ENCODE measurements at regions of chr12 and their contacts with region 1.

Region 1: DNA sequence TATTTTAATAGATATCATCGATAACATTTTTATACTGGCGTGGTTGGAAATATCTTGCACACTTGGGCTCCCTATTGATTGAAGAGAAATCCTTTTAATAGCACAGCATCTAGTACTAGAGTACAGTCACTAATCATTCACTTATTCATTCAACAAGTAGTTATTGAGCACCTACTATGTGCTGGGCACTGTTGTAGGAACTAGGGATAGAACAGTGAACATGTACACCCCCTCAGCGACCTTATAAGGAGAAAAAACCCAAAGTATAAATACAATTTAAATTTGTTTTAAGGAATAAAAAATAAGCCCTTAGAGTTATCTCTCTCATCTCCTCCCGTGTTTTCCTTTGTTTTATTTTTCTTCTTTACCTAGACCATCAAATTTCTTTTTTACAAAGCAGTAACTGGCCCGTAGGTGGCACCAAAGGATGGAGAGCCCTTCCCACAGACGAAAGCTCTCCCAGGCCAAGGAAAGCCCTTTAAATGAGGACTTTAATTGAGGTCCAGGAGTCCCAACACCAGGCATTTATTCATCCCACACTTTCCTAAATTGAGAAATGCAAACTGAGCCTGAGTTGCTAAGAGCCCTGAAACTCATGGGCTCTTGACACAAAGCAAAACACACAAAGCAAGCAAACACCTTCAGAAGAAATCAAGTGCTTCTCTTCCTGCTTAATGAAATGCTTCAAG is 29.0 kb downstream of the PEBP1 start:
- DNase-seq: no peak
- ATAC-seq: 0 out of 3 replicates have a peak, but pooled peaks have one; percentile 13
- H3K4me3 ChIP-seq: no peak overlapping the region
- H3K27ac ChIP-seq: no peak overlapping the region
- H3K4me1 ChIP-seq: peaks cover 24% of the 10 kb centered on the region
- H3K27me3 ChIP-seq: no peaks in the 10 kb centered on the region
- CTCF ChIP-seq: peak; percentile 45 to 56 (median 45)
- EP300 ChIP-seq: no peak
- POLR2A ChIP-seq: no peak
- RAD21 ChIP-seq: peak; percentile 72

Region 2: DNA sequence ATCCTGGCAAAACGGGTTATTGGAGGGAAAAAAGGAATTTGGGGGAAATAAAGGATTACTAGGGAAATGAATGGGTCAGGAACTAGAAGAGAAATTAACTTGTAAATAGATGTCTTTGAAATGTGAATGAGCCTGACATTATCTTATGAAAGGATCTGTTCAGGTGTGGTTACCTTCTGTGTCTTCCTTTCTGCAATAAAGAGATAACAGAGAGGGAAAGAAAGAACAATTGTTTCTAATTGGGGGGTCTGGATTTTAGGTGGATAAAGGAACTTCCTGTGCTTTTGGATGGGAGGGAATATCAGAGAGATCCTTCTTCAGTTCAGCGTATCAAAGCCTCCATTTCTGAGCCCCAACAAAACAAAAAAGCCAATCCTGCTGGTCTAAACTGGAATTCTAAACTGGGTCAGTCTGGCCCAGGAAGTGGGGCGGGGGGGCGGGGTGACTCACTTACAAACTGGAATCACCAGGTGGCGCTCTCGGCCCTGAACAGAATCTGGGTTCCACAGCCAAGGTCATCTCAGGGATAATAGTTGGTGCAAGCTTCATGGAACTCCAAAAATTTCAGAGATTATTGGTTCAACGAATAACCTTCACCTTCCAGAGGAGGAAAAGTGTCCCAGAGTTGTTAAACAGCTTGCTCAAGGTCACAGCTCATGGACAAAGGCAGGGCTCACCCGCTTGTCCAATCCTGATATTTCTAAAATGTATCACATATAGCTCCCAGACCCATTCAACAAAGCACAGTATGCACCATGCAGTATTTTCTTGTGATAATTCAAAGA is 44.2 kb before region 1 on chr12:
- CTCF ChIA-PET with region 1: interaction called, 14 read pairs
- POLR2A ChIA-PET with region 1: no interaction called
- RAD21 ChIA-PET with region 1: interaction called, 5 read pairs
- SMC1A ChIA-PET with region 1: interaction called, 4 read pairs
- in situ Hi-C with region 1: no loop called
- intact Hi-C with region 1: no loop called
- DNase-seq: no peak
- ATAC-seq: peak; percentile 97
- H3K4me3 ChIP-seq: no peak overlapping the region
- H3K27ac ChIP-seq: peak overlapping the region; percentile 83
- H3K4me1 ChIP-seq: no peaks in the 10 kb centered on the region; the same call in 1 of the 2 replicates
- H3K27me3 ChIP-seq: no peaks in the 10 kb centered on the region
- CTCF ChIP-seq: peak; percentile 50 to 70 (median 64)
- EP300 ChIP-seq: no peak
- POLR2A ChIP-seq: no peak
- RAD21 ChIP-seq: peak; percentile 70

Region 3: DNA sequence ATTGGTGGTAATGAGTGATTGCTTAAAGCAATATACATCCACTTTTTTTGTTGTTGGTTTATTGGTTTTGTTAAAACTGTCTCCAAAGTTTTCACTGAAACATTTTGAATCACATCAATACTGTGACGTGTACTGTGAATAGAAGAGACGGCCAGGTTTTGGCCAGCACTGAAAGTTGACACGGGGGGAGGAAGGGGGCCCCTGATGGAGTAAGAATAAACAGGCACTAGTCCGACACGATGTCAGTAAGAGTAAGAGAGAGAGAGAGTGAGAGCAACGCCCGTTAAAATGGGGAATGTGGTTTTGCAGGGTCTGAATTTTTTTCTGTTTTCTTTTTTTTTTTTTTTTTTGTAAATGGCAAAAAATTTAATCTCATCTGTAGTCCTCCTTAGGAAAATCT is 14.3 kb before region 1 on chr12:
- CTCF ChIA-PET with region 1: interaction called, 7 read pairs
- POLR2A ChIA-PET with region 1: interaction called, 3 read pairs
- RAD21 ChIA-PET with region 1: interaction called, 3 read pairs
- SMC1A ChIA-PET with region 1: interaction called, 21 read pairs
- in situ Hi-C with region 1: no loop called
- intact Hi-C with region 1: no loop called
- DNase-seq: no peak
- ATAC-seq: no peak
- H3K4me3 ChIP-seq: no peak overlapping the region
- H3K27ac ChIP-seq: no peak overlapping the region
- H3K4me1 ChIP-seq: peaks cover 4% of the 10 kb centered on the region
- H3K27me3 ChIP-seq: no peaks in the 10 kb centered on the region
- CTCF ChIP-seq: no peak
- EP300 ChIP-seq: no peak
- POLR2A ChIP-seq: no peak
- RAD21 ChIP-seq: no peak

Region 4: DNA sequence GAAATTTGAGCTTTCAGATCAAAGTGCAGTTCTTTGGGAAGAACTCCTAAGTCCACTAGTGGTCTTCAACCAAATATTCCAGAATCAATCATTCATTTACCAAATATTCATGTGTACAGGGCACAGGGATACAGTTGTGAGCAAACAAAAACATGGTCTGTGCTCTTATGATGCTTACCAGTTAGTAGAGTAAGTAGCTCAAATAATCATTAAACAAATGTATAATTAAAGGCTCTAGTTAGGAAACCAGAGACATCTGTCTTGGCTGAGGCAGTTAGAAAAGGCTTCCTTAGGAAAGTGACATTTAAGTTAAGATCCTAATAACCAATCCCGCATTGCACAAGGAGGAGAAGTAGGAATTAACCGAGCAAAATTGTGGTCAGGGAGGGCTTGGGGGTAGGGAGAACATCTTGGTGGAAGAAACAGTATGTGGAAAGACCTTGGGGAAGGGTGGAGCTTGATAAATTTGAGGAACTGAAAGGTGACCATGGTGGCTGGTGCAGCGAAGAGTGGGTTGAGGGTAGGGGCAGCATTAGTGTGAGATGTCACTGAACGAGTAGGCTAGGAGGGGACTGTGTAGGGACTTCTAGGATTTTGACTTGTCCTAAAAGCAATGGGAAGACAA is 11.0 kb after region 1 on chr12:
- CTCF ChIA-PET with region 1: interaction called, 64 read pairs
- POLR2A ChIA-PET with region 1: interaction called, 3 read pairs
- RAD21 ChIA-PET with region 1: no interaction called
- SMC1A ChIA-PET with region 1: interaction called, 15 read pairs
- in situ Hi-C with region 1: no loop called
- intact Hi-C with region 1: no loop called
- DNase-seq: peak; percentile 45
- ATAC-seq: peak; percentile 99
- H3K4me3 ChIP-seq: no peak overlapping the region
- H3K27ac ChIP-seq: peak overlapping the region; percentile 22; the same call in 1 of the 2 replicates
- H3K4me1 ChIP-seq: peaks cover 8% of the 10 kb centered on the region
- H3K27me3 ChIP-seq: no peaks in the 10 kb centered on the region
- CTCF ChIP-seq: no peak
- EP300 ChIP-seq: no peak
- POLR2A ChIP-seq: no peak
- RAD21 ChIP-seq: no peak

Region 5: GRCh38 chr12:118206107-118206412 is 41.1 kb after region 1 on chr12:
- CTCF ChIA-PET with region 1: interaction called, 5 read pairs
- POLR2A ChIA-PET with region 1: no interaction called
- RAD21 ChIA-PET with region 1: interaction called, 11 read pairs
- SMC1A ChIA-PET with region 1: interaction called, 5 read pairs
- in situ Hi-C with region 1: no loop called
- intact Hi-C with region 1: no loop called
- DNase-seq: no peak
- ATAC-seq: peak; percentile 14
- H3K4me3 ChIP-seq: no peak overlapping the region
- H3K27ac ChIP-seq: peak overlapping the region; percentile 51
- H3K4me1 ChIP-seq: peaks cover 8% of the 10 kb centered on the region
- H3K27me3 ChIP-seq: no peaks in the 10 kb centered on the region
- CTCF ChIP-seq: no peak
- EP300 ChIP-seq: no peak
- POLR2A ChIP-seq: no peak
- RAD21 ChIP-seq: no peak

Region 6: DNA sequence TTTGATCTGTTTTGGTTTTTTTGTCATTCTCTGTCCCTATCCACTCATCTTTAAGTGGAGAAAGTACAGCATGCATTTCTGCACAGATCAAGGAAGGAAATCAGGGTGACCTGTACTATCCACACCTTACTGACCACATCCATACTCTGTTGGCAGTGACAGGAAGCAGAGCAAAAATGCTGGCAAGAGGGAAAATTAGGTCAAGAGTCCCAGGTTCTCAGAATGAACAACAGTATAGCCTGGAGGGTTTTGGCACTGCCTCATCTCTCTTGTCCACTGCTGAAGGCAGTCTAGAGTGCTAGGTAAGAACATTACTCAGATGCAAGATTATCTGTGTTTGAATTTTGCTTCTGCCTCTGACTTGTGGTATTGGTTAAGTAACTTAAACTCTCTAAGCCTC is 137.1 kb after region 1 on chr12:
- CTCF ChIA-PET with region 1: interaction called, 3 read pairs
- POLR2A ChIA-PET with region 1: interaction called, 5 read pairs
- RAD21 ChIA-PET with region 1: interaction called, 3 read pairs
- SMC1A ChIA-PET with region 1: no interaction called
- in situ Hi-C with region 1: no loop called
- intact Hi-C with region 1: loop called (anchors 5 kb)
- DNase-seq: no peak
- ATAC-seq: peak; percentile 45
- H3K4me3 ChIP-seq: no peak overlapping the region
- H3K27ac ChIP-seq: peak overlapping the region; percentile 48; the same call in 1 of the 2 replicates
- H3K4me1 ChIP-seq: peaks cover 29% of the 10 kb centered on the region
- H3K27me3 ChIP-seq: no peaks in the 10 kb centered on the region
- CTCF ChIP-seq: no peak
- EP300 ChIP-seq: no peak
- POLR2A ChIP-seq: no peak
- RAD21 ChIP-seq: no peak